Aorta (tissue), 5 donors: ENCODE measurements at regions of chr19 and their contacts with region 1.

Region 1: GRCh38 chr19:21767065-21767800 is at the start of gene ZNF100:
- DNase-seq: peak; percentile 96
- ATAC-seq: peak; percentile 95
- H3K4me3 ChIP-seq: peak within 1 kb of the TSS; percentile 40 to 74
- H3K27ac ChIP-seq: peak within 1 kb of the TSS in 1 of 2 donors; percentile 80
- H3K4me1 ChIP-seq: no peaks in the 10 kb centered on the region
- H3K27me3 ChIP-seq: no peaks in the 10 kb centered on the region
- total RNA-seq, gene ZNF100: 17.0 to 21.6 TPM

Region 2: GRCh38 chr19:21740559-21740958 is 26.7 kb before region 1 on chr19:
- intact Hi-C with region 1: no loop called
- DNase-seq: no peak
- ATAC-seq: no peak
- H3K4me3 ChIP-seq: no peak overlapping the region
- H3K27ac ChIP-seq: no peak overlapping the region
- H3K4me1 ChIP-seq: no peaks in the 10 kb centered on the region
- H3K27me3 ChIP-seq: no peaks in the 10 kb centered on the region

Region 3: DNA sequence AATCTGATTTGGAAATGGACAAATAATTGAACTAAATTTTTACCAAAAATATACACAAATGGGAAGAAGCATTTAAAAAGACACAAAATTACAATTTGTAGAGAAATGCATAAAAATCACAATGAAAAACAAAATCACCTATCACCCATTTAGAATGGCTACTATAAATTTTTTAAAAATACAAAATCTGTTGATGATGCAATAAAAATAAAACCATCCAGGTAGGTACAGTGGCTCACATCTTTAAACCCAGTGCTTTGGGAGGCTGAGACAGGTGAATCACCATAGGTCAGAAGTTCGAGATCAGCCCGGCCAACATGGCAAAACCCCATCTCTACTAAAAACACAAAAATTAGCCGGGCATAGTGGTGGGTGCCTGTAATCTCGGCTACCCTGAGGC is 45.2 kb after region 1 on chr19:
- intact Hi-C with region 1: no loop called
- DNase-seq: no peak
- ATAC-seq: no peak
- H3K4me3 ChIP-seq: no peak overlapping the region
- H3K27ac ChIP-seq: no peak overlapping the region
- H3K4me1 ChIP-seq: no peaks in the 10 kb centered on the region
- H3K27me3 ChIP-seq: no peaks in the 10 kb centered on the region

Region 4: GRCh38 chr19:21851596-21852345 is 84.5 kb after region 1 on chr19:
- intact Hi-C with region 1: loop called in 1 of 2 experiments (anchors 5 kb)
- DNase-seq: peak; percentile 97
- ATAC-seq: peak; percentile 99
- H3K4me3 ChIP-seq: peak overlapping the region; percentile 62 to 71
- H3K27ac ChIP-seq: peak overlapping the region in 1 of 2 donors; percentile 87
- H3K4me1 ChIP-seq: no peaks in the 10 kb centered on the region
- H3K27me3 ChIP-seq: no peaks in the 10 kb centered on the region